ENCODE measurements at regions of chr7 and their contacts with region 1.

Region 1: DNA sequence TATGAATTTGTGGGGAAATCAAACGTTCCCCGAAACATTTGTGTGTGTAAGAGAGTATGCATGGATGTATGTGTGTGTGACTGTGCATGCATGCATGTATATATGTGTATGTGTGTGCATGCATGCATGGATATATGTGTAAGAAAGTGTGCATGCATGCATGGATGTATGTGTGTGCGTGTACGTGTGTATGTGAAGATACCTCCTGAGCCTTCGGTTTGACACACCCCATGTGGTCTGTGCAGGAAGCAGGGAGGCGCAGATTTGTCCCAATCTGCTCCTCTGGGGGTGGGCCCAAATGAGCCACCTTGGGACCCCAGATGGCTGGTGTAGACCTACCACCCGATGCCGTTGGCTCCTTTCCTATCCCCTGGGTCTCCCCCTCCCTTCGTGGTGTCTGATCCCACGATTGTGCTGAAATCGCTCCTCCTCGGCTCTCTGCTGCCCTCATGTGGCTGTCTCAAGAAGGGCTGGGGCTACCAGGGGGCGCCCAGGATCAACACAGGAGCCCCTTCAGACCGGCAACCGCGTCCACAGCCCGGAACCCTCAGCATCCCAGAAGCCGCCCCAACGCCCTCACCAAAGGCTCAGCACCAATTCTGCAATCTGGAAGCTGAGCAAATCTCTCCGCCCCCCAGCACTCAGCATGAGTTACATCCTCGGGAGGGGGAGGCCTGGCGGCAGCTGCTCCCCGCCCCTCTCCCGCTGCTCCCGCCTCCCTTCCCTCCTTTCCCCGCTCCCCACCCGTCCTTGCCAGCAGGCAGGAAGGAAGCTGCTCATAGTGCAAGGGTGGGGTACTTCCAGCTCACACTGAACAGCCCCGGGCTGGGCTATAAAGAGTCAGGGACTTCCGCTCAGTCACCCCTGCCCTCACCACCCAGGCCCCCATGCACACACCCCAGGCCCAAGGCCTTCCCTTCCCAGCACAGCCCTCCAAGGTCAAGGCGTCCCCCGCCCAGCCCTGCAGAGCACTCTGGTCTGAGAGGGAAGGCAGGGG is 2.3 kb upstream of the NOS3 start:
- DNase-seq: peak; percentile 72
- H3K4me3 ChIP-seq: peak overlapping the region; percentile 33
- H3K27ac ChIP-seq: peak overlapping the region; percentile 88
- H3K4me1 ChIP-seq: peaks cover 54% of the 10 kb centered on the region
- H3K27me3 ChIP-seq: no peaks in the 10 kb centered on the region
- CTCF ChIP-seq: peak; percentile 97

Region 2: GRCh38 chr7:150502519-150502918 is 486.0 kb before region 1 on chr7:
- intact Hi-C with region 1: no loop called
- DNase-seq: no peak
- H3K4me3 ChIP-seq: no peak overlapping the region
- H3K27ac ChIP-seq: no peak overlapping the region
- H3K4me1 ChIP-seq: peaks cover 27% of the 10 kb centered on the region
- H3K27me3 ChIP-seq: no peaks in the 10 kb centered on the region
- CTCF ChIP-seq: no peak

Region 3: GRCh38 chr7:150778738-150779301 is 209.7 kb before region 1 on chr7:
- intact Hi-C with region 1: loop called (anchors 5 kb)
- DNase-seq: peak; percentile 85
- H3K4me3 ChIP-seq: no peak overlapping the region
- H3K27ac ChIP-seq: no peak overlapping the region
- H3K4me1 ChIP-seq: peaks cover 7% of the 10 kb centered on the region
- H3K27me3 ChIP-seq: no peaks in the 10 kb centered on the region
- CTCF ChIP-seq: peak; percentile 94

Region 4: GRCh38 chr7:150898475-150899011 is 90.0 kb before region 1 on chr7:
- intact Hi-C with region 1: loop called (anchors 5 kb)
- DNase-seq: peak; percentile 82
- H3K4me3 ChIP-seq: no peak overlapping the region
- H3K27ac ChIP-seq: no peak overlapping the region
- H3K4me1 ChIP-seq: peaks cover 28% of the 10 kb centered on the region
- H3K27me3 ChIP-seq: peaks cover 66% of the 10 kb centered on the region
- CTCF ChIP-seq: peak; percentile 98

Region 5: DNA sequence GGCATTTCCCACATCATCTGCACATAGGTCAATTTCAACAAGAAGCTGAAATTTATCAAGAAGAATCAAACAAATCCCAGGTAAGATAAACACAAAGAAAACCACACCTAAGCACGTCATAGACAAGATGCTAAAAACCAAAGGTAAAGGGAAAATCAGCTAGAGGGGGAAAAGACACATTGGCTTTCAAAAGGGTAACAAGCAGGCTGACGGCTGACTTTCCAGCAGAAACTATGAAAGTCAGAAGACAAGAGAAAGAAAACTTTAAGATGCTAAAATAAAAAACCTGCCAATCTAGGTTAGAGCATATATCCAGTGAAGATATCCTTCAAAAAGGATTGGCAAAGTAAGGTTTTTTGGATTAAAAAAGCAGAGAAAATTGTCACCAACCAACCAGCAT is 591.1 kb after region 1 on chr7:
- intact Hi-C with region 1: no loop called
- DNase-seq: no peak
- H3K4me3 ChIP-seq: no peak overlapping the region
- H3K27ac ChIP-seq: no peak overlapping the region
- H3K4me1 ChIP-seq: peaks cover 3% of the 10 kb centered on the region
- H3K27me3 ChIP-seq: no peaks in the 10 kb centered on the region
- CTCF ChIP-seq: no peak